Activated CD4-positive, alpha-beta memory T cell treated with anti-CD3 and anti-CD28 coated beads, Interleukin-2, amount 10 ng/mL, durations not matched to agents 7 days and 5 days (primary cell): ENCODE measurements at regions of chr15 and their contacts with region 1.

Region 1: GRCh38 chr15:74598126-74598842 is 17.4 kb upstream of the CLK3 start:
- DNase-seq: peak; percentile 92
- H3K4me3 Mint-ChIP-seq: peak overlapping the region; percentile 95
- H3K27ac Mint-ChIP-seq: peak overlapping the region; percentile 95
- H3K4me1 Mint-ChIP-seq: peaks cover 19% of the 10 kb centered on the region
- H3K27me3 Mint-ChIP-seq: no peaks in the 10 kb centered on the region

Region 2: GRCh38 chr15:74531144-74531811 is 67.0 kb before region 1 on chr15:
- CTCF ChIA-PET with region 1: no interaction called
- POLR2A ChIA-PET with region 1: no interaction called
- DNase-seq: no peak
- H3K4me3 Mint-ChIP-seq: no peak overlapping the region
- H3K27ac Mint-ChIP-seq: no peak overlapping the region
- H3K4me1 Mint-ChIP-seq: peaks cover 7% of the 10 kb centered on the region
- H3K27me3 Mint-ChIP-seq: no peaks in the 10 kb centered on the region

Region 3: DNA sequence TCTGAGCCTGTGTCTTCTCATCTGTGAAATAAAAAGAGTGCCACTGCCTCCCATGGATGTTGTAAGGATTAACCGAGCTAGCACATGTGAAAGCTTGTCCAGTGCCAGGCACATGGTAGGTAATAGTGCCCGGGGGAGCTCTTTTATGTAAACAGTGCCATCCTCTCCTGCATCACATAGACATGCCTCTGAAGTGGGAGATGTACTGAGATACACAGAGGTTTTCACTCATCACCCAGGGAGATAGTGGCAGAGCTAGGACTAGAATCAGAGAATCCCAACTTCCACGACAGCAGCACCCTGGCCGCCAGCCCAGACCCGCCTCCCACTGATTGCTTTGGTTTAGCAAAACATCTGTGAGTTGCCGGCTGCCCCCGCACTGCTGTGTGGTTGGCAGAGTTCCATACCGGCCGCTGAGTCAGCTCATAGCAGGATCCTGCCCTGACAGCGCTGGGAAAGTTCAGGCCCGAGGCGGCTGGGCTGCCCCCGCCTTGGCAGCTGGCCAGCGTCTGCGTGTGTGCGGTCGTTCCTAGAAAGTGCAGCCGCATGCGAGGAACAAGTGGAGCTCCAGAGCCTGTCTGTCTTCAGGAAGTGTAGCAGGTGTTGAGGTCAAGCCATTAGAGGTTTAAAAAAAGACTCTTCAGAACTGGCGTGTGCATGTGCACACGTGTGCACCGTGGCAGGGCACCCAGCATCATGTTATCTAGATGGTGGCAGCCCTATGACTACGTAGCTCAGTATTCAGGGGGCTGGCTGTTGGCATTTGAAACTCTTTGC is 52.2 kb before region 1 on chr15:
- CTCF ChIA-PET with region 1: interaction called, 4 read pairs
- POLR2A ChIA-PET with region 1: interaction called, 30 read pairs
- DNase-seq: peak; percentile 89
- H3K4me3 Mint-ChIP-seq: peak overlapping the region; percentile 60
- H3K27ac Mint-ChIP-seq: peak overlapping the region; percentile 79
- H3K4me1 Mint-ChIP-seq: peaks cover 82% of the 10 kb centered on the region
- H3K27me3 Mint-ChIP-seq: no peaks in the 10 kb centered on the region

Region 4: DNA sequence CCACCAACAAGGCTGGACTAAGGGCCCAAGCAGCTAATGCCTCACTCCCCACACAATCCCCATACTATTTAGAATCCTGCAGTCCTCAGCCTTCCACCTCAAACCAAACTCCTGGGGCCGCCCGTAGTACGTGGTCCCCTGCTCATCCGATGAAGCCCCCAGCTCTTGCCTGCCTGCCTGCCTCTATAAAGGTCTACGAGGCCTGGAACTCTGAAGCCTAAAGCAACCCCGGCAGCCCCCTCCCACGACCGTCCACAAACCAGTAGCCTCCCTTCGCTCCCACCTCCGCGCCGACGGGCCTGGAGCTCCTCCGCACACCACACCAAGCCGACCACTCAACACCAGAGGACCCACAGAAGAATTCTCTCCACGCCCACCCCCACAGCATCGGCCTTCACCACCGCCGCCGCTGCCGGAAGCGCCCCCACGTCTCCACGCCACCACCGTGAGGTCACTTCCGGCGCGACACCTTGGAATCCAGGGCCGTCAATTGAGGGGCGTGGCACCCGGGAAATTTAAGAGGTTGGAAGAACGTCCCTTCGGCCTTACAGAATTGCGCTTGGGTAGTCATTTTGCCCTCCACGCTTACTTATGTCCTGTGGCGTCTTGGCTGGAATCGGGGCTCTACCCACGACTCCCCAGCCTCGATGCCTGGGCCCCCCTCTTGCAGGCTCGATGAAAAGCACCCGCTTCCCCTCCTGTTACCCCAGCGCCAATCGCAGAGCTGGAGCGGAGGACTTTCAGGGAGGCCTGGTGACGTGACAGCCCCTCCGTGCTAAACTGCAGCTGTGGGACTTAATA is 97.5 kb after region 1 on chr15 and contains the start of gene EDC3:
- CTCF ChIA-PET with region 1: no interaction called
- POLR2A ChIA-PET with region 1: no interaction called
- DNase-seq: peak; percentile 86
- H3K4me3 Mint-ChIP-seq: peak within 1 kb of the TSS; percentile 100
- H3K27ac Mint-ChIP-seq: peak within 1 kb of the TSS; percentile 96
- H3K4me1 Mint-ChIP-seq: peaks cover 42% of the 10 kb centered on the region
- H3K27me3 Mint-ChIP-seq: no peaks in the 10 kb centered on the region
- total RNA-seq, gene EDC3: 36.3 to 39.6 TPM